ENCODE measurements at regions of chr1 and their contacts with region 1.

Region 1: DNA sequence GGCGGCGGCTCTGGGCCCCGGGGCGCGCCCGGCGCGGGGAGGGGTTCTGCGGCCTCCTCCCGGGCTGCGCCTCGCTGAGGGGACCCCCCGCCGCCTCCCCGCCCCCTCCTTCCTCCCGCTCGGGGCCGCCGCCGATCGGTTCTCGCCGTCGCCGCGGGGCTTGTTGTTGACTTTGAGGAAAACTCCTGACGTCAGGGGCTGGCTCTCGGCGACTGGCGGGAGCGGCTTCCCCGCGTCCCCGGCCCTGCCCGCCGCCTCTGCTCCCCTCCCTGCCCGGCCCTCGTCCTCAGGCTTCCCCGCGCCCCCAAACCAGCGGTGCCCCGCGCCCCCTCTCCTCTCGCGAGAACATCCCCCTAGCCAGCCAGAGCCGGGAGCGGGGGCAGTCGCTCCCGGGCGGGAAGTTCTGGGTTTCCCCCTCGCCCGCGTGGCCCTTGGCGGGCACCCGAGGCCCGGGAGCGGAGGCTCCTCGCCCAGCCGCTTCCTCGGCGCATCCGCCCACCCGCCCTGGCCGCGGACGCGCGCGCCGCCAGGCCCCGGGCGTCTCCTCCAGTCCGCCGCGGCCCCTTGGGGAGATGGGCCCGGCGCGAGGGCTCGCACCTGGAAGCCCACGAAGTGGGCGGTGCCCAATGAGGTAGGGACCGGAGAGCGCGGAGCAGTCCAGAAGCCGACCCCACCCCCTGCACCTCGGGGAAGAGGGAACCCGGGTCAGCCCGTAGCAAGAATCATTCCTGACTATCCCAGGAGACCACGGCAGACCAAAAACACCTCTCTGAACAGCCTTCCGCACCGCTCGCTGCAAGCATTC is 611 bp upstream of the AKT3 start:
- DNase-seq: peak; percentile 88
- ATAC-seq: peak; percentile 45
- H3K4me3 ChIP-seq: peak overlapping the region; percentile 70 to 82 (median 76)
- H3K4me3 Mint-ChIP-seq: peak overlapping the region; percentile 92
- H3K27ac ChIP-seq: peak overlapping the region; percentile 87 to 98
- H3K27ac Mint-ChIP-seq: peak overlapping the region; percentile 96
- H3K4me1 ChIP-seq: peaks cover 13 to 14% of the 10 kb centered on the region in 2 donors
- H3K4me1 Mint-ChIP-seq: peaks cover 35% of the 10 kb centered on the region
- H3K27me3 ChIP-seq: peaks cover 0 to 3% (median 0%) of the 10 kb centered on the region in 4 experiments
- H3K27me3 Mint-ChIP-seq: peaks cover 15% of the 10 kb centered on the region
- CTCF ChIP-seq: no peak

Region 2: DNA sequence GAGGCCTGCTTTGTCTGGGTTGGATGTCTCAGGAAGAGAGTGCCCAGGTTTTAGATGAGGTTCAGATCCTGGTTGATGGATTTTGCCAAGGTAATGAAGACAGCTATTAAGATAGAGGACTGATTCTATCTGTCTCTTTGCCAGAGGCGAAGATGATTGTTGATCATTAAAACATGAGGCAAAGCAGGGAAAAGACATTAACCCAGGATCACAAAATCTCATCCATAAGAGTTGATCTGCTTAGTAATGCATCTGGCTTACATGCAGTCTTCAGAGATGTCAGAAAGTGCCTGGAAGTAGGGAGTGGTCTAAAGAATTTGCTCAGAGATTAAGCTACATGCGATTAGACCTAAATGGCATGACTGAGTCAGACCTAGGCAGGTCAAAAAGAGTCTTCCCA is 1096.5 kb before region 1 on chr1:
- CTCF ChIA-PET with region 1: no interaction called
- POLR2A ChIA-PET with region 1: no interaction called
- intact Hi-C with region 1: no loop called
- DNase-seq: no peak
- ATAC-seq: no peak
- H3K4me3 ChIP-seq: no peak overlapping the region
- H3K4me3 Mint-ChIP-seq: no peak overlapping the region
- H3K27ac ChIP-seq: no peak overlapping the region
- H3K27ac Mint-ChIP-seq: no peak overlapping the region
- H3K4me1 ChIP-seq: no peaks in the 10 kb centered on the region
- H3K4me1 Mint-ChIP-seq: no peaks in the 10 kb centered on the region
- H3K27me3 ChIP-seq: no peaks in the 10 kb centered on the region
- H3K27me3 Mint-ChIP-seq: no peaks in the 10 kb centered on the region
- CTCF ChIP-seq: no peak

Region 3: DNA sequence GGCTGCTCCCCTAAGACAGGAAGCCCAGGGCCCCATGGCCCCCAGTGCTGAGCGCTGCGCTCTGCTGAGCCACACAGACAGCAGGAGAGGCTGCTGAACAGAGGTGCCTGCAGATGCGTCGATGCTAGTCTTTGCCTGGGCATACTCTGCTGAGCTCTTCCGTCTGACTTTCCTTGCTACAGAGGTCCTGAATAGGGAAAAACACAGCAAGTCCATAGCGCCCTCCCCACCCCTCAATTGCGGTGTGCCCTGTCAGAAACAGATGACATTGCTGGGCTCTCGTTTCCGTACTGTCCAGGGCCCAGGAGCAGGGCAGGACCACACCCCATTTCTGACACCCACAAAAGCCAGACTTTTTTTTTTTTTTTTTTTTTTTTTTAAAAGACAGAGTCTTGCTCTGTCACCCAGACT is 342.3 kb before region 1 on chr1:
- CTCF ChIA-PET with region 1: no interaction called
- POLR2A ChIA-PET with region 1: no interaction called
- intact Hi-C with region 1: loop called (anchors 5 kb)
- DNase-seq: peak; percentile 71
- ATAC-seq: peak; percentile 89
- H3K4me3 ChIP-seq: peak overlapping the region in 3 of 5 experiments; percentile 11 to 34 (median 26)
- H3K4me3 Mint-ChIP-seq: peak overlapping the region; percentile 78
- H3K27ac ChIP-seq: peak overlapping the region; percentile 3 to 31
- H3K27ac Mint-ChIP-seq: peak overlapping the region; percentile 88
- H3K4me1 ChIP-seq: peaks cover 32 to 34% of the 10 kb centered on the region in 2 donors
- H3K4me1 Mint-ChIP-seq: peaks cover 46% of the 10 kb centered on the region
- H3K27me3 ChIP-seq: no peaks in the 10 kb centered on the region
- H3K27me3 Mint-ChIP-seq: no peaks in the 10 kb centered on the region
- CTCF ChIP-seq: no peak

Region 4: DNA sequence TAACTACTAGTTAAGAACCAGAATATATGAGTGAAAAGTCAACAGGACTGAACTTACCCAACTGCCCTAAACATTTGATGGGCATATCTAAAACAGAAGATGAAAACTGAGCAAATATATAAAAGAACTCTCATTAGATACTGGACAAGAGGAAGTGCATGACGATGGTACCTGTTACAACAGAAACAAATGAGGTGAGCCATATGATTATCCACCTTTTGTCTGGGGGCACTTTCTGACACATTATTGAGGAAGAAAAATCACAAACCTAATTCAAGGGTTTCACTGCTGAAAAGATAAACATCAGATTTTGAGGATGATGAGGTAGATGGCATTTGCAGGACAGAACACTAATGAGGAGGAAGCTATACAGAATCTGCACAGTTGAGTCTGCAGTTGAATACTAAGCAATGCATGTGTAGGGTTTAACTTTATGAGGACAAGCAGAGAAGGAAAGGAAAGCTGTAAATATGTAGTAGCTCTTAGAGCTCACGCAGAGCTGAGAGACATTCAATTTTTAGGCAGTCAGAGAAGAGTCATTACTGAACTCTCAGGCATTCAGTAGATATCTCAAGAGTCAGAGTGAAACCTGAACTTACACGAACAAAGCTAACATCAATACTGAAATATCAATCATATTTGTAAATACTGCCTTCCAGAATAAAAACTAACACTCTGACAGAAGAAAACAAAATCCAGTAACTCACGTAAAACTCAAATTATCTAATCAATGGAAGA is 262.7 kb before region 1 on chr1:
- CTCF ChIA-PET with region 1: no interaction called
- POLR2A ChIA-PET with region 1: no interaction called
- intact Hi-C with region 1: no loop called
- DNase-seq: no peak
- ATAC-seq: no peak
- H3K4me3 ChIP-seq: no peak overlapping the region
- H3K4me3 Mint-ChIP-seq: peak overlapping the region; percentile 2
- H3K27ac ChIP-seq: no peak overlapping the region
- H3K27ac Mint-ChIP-seq: no peak overlapping the region
- H3K4me1 ChIP-seq: peaks cover 0 to 4% of the 10 kb centered on the region in 2 donors
- H3K4me1 Mint-ChIP-seq: peaks cover 16% of the 10 kb centered on the region
- H3K27me3 ChIP-seq: no peaks in the 10 kb centered on the region
- H3K27me3 Mint-ChIP-seq: no peaks in the 10 kb centered on the region
- CTCF ChIP-seq: no peak

Region 5: GRCh38 chr1:243727503-243728203 is 123.0 kb before region 1 on chr1:
- CTCF ChIA-PET with region 1: no interaction called
- POLR2A ChIA-PET with region 1: no interaction called
- intact Hi-C with region 1: loop called (anchors 5 kb)
- DNase-seq: peak; percentile 76
- ATAC-seq: peak; percentile 85
- H3K4me3 ChIP-seq: peak overlapping the region in 3 of 5 experiments; percentile 6 to 39 (median 8)
- H3K4me3 Mint-ChIP-seq: peak overlapping the region; percentile 58
- H3K27ac ChIP-seq: peak overlapping the region; percentile 74 to 78
- H3K27ac Mint-ChIP-seq: peak overlapping the region; percentile 89
- H3K4me1 ChIP-seq: peaks cover 30 to 35% of the 10 kb centered on the region in 2 donors
- H3K4me1 Mint-ChIP-seq: peaks cover 67% of the 10 kb centered on the region
- H3K27me3 ChIP-seq: no peaks in the 10 kb centered on the region
- H3K27me3 Mint-ChIP-seq: no peaks in the 10 kb centered on the region
- CTCF ChIP-seq: no peak

Region 6: GRCh38 chr1:244074559-244075171 is 224.0 kb after region 1 on chr1:
- CTCF ChIA-PET with region 1: no interaction called
- POLR2A ChIA-PET with region 1: no interaction called
- intact Hi-C with region 1: loop called (anchors 1 kb)
- DNase-seq: peak; percentile 79
- ATAC-seq: peak; percentile 72
- H3K4me3 ChIP-seq: peak overlapping the region; percentile 32 to 59 (median 52)
- H3K4me3 Mint-ChIP-seq: peak overlapping the region; percentile 87
- H3K27ac ChIP-seq: peak overlapping the region; percentile 78 to 81
- H3K27ac Mint-ChIP-seq: peak overlapping the region; percentile 94
- H3K4me1 ChIP-seq: peaks cover 52 to 56% of the 10 kb centered on the region in 2 donors
- H3K4me1 Mint-ChIP-seq: peaks cover 52% of the 10 kb centered on the region
- H3K27me3 ChIP-seq: no peaks in the 10 kb centered on the region
- H3K27me3 Mint-ChIP-seq: no peaks in the 10 kb centered on the region
- CTCF ChIP-seq: no peak

Region 7: GRCh38 chr1:244302889-244303613 is 452.4 kb after region 1 on chr1:
- CTCF ChIA-PET with region 1: no interaction called
- POLR2A ChIA-PET with region 1: no interaction called
- intact Hi-C with region 1: loop called (anchors 1 kb)
- DNase-seq: no peak
- ATAC-seq: no peak
- H3K4me3 ChIP-seq: no peak overlapping the region
- H3K4me3 Mint-ChIP-seq: no peak overlapping the region
- H3K27ac ChIP-seq: no peak overlapping the region
- H3K27ac Mint-ChIP-seq: no peak overlapping the region
- H3K4me1 ChIP-seq: peaks cover 4 to 17% of the 10 kb centered on the region in 2 donors
- H3K4me1 Mint-ChIP-seq: peaks cover 10% of the 10 kb centered on the region
- H3K27me3 ChIP-seq: no peaks in the 10 kb centered on the region
- H3K27me3 Mint-ChIP-seq: no peaks in the 10 kb centered on the region
- CTCF ChIP-seq: no peak

Region 8: DNA sequence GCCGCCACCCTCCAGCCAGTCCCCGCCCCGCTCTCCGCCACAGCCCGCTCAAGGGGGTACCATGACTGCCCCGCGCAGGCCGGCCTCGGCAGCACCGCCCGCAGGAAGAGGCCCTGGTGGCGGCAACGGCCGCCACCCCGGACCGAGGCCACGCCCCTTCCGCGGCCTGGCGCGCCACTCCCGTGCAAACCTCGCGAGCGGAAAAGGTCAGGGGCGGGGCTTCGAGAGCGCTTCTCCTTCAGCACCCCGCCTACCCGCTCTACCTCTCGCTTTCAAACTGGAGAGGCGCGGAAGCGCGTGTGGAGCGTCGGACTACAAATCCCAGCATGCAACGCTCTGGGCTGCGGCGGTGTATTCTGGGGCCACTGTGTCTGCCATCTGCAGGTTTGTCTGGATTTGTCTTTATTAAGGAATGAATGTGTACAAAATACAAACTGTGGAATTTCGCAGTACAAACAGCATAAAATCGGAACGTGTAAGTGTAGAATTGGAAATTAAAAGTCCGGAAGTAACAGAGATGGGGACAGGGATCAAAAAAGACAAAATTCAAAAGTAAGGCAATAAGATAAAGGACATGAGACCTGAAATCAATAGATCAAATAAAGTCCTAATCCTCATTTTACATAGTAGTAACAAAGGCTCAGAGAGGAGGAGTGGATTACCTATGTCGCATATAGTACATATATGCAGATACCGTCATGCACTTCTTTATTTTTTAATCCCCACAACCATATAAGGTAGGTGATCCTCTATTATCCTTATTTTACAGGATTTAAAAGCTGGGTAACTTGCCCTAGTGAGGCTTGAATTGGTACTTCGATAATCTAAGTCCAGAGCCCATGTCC is 601.5 kb after region 1 on chr1:
- CTCF ChIA-PET with region 1: no interaction called
- POLR2A ChIA-PET with region 1: no interaction called
- intact Hi-C with region 1: loop called (anchors 5 kb)
- DNase-seq: peak; percentile 100
- ATAC-seq: peak; percentile 92
- H3K4me3 ChIP-seq: peak overlapping the region in 4 of 5 experiments; percentile 88 to 98 (median 93)
- H3K4me3 Mint-ChIP-seq: peak overlapping the region; percentile 95
- H3K27ac ChIP-seq: peak overlapping the region; percentile 92 to 94
- H3K27ac Mint-ChIP-seq: peak overlapping the region; percentile 94
- H3K4me1 ChIP-seq: peaks cover 17 to 18% of the 10 kb centered on the region in 2 donors
- H3K4me1 Mint-ChIP-seq: peaks cover 35% of the 10 kb centered on the region
- H3K27me3 ChIP-seq: no peaks in the 10 kb centered on the region
- H3K27me3 Mint-ChIP-seq: no peaks in the 10 kb centered on the region
- CTCF ChIP-seq: peak; percentile 47

Measured in B cell (primary cell).